Activated CD4-positive, alpha-beta T cell treated with anti-CD3 and anti-CD28 coated beads for 36 hours (primary cell): ENCODE measurements at regions of chr11 and their contacts with region 1.

Region 1: GRCh38 chr11:12087075-12088004 is 23.1 kb upstream of the MICAL2 start:
- DNase-seq: peak; percentile 62
- ATAC-seq: peak; percentile 86
- H3K4me3 Mint-ChIP-seq: no peak overlapping the region
- H3K27ac Mint-ChIP-seq: peak overlapping the region; percentile 56
- H3K4me1 Mint-ChIP-seq: peaks cover 59% of the 10 kb centered on the region
- H3K27me3 Mint-ChIP-seq: no peaks in the 10 kb centered on the region

Region 2: DNA sequence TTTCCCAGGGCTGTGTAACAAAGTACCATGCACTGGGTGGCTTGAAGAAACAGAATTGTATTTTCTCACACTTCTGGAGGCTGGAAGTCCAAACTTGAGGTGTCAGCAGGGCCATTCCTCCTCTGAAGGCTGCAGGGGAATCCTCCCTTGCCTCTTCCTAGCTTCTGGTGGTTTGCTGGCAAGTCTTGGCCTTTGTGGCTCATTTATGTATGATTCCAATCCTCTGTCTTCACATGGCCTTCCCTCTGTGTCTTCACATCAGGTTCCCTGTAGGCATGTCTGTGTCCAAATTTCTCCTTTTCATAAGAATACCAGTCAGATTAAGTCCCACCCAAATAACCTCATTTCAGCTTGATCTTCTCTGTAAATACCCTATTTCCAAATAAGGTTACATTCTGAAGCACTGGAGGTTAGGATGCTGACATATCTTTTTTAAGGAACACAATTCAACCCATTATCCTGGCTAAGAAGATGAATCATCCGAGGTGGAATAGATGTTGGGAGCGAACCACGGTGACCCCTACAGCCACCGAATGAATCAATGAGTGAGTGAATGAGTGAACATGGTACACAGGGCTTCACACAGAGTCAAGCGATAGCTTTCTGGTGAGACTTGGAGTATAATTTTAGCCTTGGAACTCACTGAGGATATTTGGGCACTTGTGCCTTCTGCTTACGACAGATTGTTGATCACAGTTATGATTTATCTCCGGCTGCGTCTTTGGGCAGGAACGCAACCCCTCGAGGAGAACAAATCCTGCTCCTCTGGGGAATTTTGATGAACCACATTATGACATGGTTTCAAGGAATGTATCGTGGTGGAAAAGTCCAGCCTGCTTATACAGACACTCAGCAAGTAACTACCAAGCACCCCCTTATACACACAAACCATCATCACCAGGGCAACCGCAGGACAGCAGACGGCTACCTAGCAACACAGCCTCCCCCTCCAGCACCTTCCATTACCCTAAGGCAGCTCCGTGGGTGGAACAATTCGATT is 11.2 kb before region 1 on chr11:
- CTCF ChIA-PET with region 1: interaction called, 10 read pairs
- POLR2A ChIA-PET with region 1: no interaction called
- intact Hi-C with region 1: no loop called
- DNase-seq: no peak
- ATAC-seq: no peak
- H3K4me3 Mint-ChIP-seq: no peak overlapping the region
- H3K27ac Mint-ChIP-seq: no peak overlapping the region
- H3K4me1 Mint-ChIP-seq: peaks cover 4% of the 10 kb centered on the region
- H3K27me3 Mint-ChIP-seq: no peaks in the 10 kb centered on the region